ENCODE measurements at regions of chr4 and their contacts with region 1.

Region 1: GRCh38 chr4:1351854-1352633 is 5.0 kb downstream of the UVSSA start:
- DNase-seq: peak; percentile 59
- H3K4me3 ChIP-seq: no peak overlapping the region
- H3K27ac ChIP-seq: no peak overlapping the region
- H3K4me1 ChIP-seq: peaks cover 16% of the 10 kb centered on the region
- H3K27me3 ChIP-seq: no peaks in the 10 kb centered on the region
- CTCF ChIP-seq: peak; percentile 87 to 98

Region 2: DNA sequence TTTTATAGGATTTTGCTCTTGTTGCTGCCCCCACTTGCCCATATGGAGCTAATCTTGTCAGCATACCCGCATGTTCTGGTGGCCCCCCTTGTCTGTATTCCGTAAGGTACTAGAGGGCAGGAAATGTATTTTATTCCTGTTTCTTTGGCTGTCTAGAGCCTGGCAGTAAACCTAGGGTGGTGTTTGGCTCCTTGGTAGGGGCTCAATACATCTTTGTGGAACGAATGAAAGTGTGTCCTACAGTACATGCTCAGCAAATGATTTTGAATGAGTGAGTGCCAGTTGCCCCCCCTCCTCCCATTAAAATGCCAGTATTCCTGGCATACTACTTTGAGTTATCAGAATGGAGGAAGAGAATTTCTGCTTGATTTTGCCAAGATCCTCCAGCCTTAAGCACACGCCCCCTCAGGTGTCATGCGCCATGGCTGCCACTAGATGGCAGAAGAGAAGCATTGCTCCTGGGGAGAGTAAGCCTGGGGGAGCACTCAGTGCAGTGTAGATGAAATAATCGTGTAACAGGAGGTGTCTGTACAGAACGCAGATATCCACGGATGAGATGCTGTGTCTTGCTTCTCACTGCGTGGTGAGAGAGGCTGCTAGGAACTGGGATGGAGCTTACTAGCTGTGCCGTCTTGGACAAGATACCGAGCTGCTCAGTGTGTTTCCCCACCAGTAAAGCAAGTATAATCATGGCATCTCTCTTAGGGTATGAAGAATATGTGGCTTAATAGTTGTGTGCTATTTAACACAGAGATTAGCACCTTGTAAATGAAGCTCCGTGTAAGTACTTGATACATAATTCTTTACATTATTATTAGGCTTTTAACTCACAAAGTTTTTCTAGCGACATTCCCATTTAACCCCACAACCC is 221.5 kb before region 1 on chr4:
- CTCF ChIA-PET with region 1: no interaction called
- dilution Hi-C with region 1: no loop called
- in situ Hi-C with region 1: loop called in 1 of 2 experiments (anchors 10 kb)
- intact Hi-C with region 1: loop called (anchors 1 kb)
- DNase-seq: peak; percentile 60
- H3K4me3 ChIP-seq: no peak overlapping the region
- H3K27ac ChIP-seq: no peak overlapping the region
- H3K4me1 ChIP-seq: no peaks in the 10 kb centered on the region
- H3K27me3 ChIP-seq: no peaks in the 10 kb centered on the region
- CTCF ChIP-seq: peak; percentile 99 to 100

Region 3: GRCh38 chr4:1277667-1278335 is 74.2 kb before region 1 on chr4:
- CTCF ChIA-PET with region 1: no interaction called
- dilution Hi-C with region 1: no loop called
- in situ Hi-C with region 1: no loop called
- intact Hi-C with region 1: loop called (anchors 2 kb)
- DNase-seq: no peak
- H3K4me3 ChIP-seq: no peak overlapping the region
- H3K27ac ChIP-seq: no peak overlapping the region
- H3K4me1 ChIP-seq: no peaks in the 10 kb centered on the region
- H3K27me3 ChIP-seq: no peaks in the 10 kb centered on the region
- CTCF ChIP-seq: peak; percentile 16 to 22

Region 4: GRCh38 chr4:1504595-1505500 is 152.8 kb after region 1 on chr4:
- CTCF ChIA-PET with region 1: no interaction called
- dilution Hi-C with region 1: loop called (anchors 5 kb)
- in situ Hi-C with region 1: no loop called
- intact Hi-C with region 1: no loop called
- DNase-seq: no peak
- H3K4me3 ChIP-seq: no peak overlapping the region
- H3K27ac ChIP-seq: no peak overlapping the region
- H3K4me1 ChIP-seq: no peaks in the 10 kb centered on the region
- H3K27me3 ChIP-seq: no peaks in the 10 kb centered on the region
- CTCF ChIP-seq: no peak

Region 5: GRCh38 chr4:1628892-1629698 is 277.1 kb after region 1 on chr4:
- CTCF ChIA-PET with region 1: no interaction called
- dilution Hi-C with region 1: no loop called
- in situ Hi-C with region 1: loop called in 1 of 2 experiments (anchors 25 kb)
- intact Hi-C with region 1: loop called (anchors 1 kb)
- DNase-seq: peak; percentile 17
- H3K4me3 ChIP-seq: no peak overlapping the region
- H3K27ac ChIP-seq: no peak overlapping the region
- H3K4me1 ChIP-seq: no peaks in the 10 kb centered on the region
- H3K27me3 ChIP-seq: no peaks in the 10 kb centered on the region
- CTCF ChIP-seq: peak; percentile 89 to 97

Region 6: DNA sequence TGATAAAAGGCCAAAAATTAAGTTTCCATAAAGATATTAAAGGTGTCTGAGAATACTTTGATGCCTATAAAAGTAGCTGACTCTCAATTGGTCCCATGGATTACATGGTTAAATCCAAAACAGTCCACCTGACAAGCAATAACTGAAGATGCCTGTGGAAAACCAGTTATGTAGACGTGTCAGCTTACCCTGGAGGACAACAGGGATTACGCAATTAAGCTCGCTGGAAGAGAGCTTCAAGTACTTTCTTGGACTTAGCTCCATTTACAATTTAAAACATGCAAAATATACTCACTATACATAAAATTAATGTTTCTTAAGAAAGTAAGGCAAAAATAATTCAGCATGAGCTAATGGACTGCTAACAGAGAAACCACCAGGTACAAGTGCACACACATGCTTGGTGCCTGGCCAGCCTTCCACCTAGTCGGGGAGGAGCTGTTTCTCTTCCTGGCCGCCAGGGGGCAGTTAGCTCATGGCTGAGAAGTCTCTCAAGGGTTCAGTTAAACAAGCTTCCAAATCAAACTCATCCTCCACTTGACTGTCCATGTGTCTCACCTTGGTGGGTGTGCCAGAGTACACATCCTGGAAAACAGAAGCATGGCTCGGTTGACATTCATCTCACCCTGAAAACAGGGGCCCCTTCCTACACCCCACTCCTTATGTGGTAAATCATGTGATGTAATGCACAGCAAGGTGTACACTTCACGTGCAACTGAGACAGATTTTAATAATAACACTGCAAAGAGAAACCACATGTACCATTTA is 341.3 kb after region 1 on chr4:
- CTCF ChIA-PET with region 1: no interaction called
- dilution Hi-C with region 1: loop called (anchors 10 kb)
- in situ Hi-C with region 1: no loop called
- intact Hi-C with region 1: no loop called
- DNase-seq: peak; percentile 68
- H3K4me3 ChIP-seq: no peak overlapping the region
- H3K27ac ChIP-seq: no peak overlapping the region
- H3K4me1 ChIP-seq: no peaks in the 10 kb centered on the region
- H3K27me3 ChIP-seq: no peaks in the 10 kb centered on the region
- CTCF ChIP-seq: peak; percentile 95 to 96

Measured in mammary epithelial cell (primary cell).